PC-3 (cell line): ENCODE measurements at regions of chr12 and their contacts with region 1.

Region 1: GRCh38 chr12:51424662-51425438 is at the start of gene SLC4A8:
- DNase-seq: peak; percentile 84
- ATAC-seq: peak; percentile 94
- H3K4me3 ChIP-seq: peak within 1 kb of the TSS; percentile 75
- H3K27ac ChIP-seq: no peak within 1 kb of the TSS
- H3K4me1 ChIP-seq: peaks cover 13% of the 10 kb centered on the region
- H3K27me3 ChIP-seq: no peaks in the 10 kb centered on the region
- CTCF ChIP-seq: peak; percentile 84
- total RNA-seq, gene SLC4A8: 3.3 and 4.2 TPM in 2 replicates

Region 2: DNA sequence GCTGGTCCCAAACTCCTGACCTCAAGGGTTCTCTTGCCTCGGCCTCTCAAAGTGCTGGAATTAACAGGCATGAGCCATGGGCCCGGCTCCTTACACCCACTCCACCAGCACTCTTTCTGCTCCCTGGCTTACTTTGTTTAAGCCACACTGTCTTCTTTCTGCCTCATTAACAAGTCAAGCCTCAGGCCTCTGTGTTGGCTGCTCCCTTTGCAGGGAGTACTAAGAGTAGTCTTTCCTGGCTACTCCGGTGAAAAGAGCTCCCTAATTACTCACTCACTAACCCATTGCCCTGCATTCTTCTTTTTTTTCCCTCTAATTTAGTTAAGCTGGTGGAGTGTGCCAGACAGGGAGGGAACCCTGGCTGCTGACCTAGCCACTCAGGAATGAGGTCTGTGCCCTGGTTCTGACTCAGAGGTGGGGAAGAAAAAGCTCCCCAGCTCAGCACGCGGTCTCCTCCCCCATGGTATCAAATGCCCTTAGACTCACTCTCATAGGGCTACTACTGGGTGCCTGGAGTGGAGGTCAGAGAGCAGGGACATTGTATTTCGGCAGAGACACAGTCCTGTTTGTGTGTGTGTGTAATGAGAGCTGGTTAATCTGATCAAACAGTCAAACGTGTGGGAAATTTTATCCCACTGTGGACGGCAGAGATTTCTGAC is 53.4 kb before region 1 on chr12:
- CTCF ChIA-PET with region 1: interaction called, 7 read pairs
- POLR2A ChIA-PET with region 1: no interaction called
- intact Hi-C with region 1: loop called (anchors 5 kb)
- DNase-seq: peak; percentile 98
- ATAC-seq: peak; percentile 97
- H3K4me3 ChIP-seq: peak overlapping the region; percentile 42
- H3K27ac ChIP-seq: peak overlapping the region; percentile 95
- H3K4me1 ChIP-seq: peaks cover 42% of the 10 kb centered on the region
- H3K27me3 ChIP-seq: no peaks in the 10 kb centered on the region
- CTCF ChIP-seq: no peak

Region 3: DNA sequence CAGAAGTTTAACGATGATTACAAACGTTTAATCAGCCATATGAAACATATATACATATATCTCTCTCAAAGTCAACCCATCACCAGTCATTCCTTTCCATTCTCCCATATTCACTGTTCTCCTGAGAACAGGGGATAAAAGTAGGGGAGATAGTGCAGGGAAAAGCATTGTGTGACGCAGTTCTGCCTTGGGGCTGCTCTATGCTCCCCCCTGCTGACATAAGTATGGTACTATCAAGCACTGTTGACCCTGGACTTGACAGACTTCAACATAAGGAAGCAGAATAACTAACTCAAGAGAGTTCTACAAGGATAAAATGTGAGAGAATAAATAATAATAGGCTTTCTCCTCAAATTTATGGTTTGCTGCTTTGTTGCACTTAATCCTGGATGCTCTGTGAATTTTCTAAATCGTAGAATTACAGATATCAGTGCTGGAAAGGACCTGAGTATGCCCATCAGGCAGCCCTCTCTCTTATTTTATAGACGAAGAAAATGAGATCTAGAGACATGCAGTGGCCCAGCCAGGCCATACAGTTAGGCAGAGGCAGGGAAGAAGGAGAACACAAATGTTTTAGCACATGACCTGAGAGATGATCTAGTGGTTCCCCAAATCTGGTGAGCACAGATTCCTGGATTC is 253.4 kb after region 1 on chr12:
- CTCF ChIA-PET with region 1: no interaction called
- POLR2A ChIA-PET with region 1: no interaction called
- intact Hi-C with region 1: loop called (anchors 1 kb)
- DNase-seq: peak; percentile 69
- ATAC-seq: peak; percentile 97
- H3K4me3 ChIP-seq: no peak overlapping the region
- H3K27ac ChIP-seq: no peak overlapping the region
- H3K4me1 ChIP-seq: peaks cover 7% of the 10 kb centered on the region
- H3K27me3 ChIP-seq: no peaks in the 10 kb centered on the region
- CTCF ChIP-seq: peak; percentile 88

Region 4: GRCh38 chr12:51871126-51871525 is 446.3 kb after region 1 on chr12:
- CTCF ChIA-PET with region 1: no interaction called
- POLR2A ChIA-PET with region 1: no interaction called
- intact Hi-C with region 1: loop called (anchors 1 kb)
- DNase-seq: no peak
- ATAC-seq: no peak
- H3K4me3 ChIP-seq: no peak overlapping the region
- H3K27ac ChIP-seq: no peak overlapping the region
- H3K4me1 ChIP-seq: no peaks in the 10 kb centered on the region
- H3K27me3 ChIP-seq: no peaks in the 10 kb centered on the region
- CTCF ChIP-seq: no peak

Region 5: DNA sequence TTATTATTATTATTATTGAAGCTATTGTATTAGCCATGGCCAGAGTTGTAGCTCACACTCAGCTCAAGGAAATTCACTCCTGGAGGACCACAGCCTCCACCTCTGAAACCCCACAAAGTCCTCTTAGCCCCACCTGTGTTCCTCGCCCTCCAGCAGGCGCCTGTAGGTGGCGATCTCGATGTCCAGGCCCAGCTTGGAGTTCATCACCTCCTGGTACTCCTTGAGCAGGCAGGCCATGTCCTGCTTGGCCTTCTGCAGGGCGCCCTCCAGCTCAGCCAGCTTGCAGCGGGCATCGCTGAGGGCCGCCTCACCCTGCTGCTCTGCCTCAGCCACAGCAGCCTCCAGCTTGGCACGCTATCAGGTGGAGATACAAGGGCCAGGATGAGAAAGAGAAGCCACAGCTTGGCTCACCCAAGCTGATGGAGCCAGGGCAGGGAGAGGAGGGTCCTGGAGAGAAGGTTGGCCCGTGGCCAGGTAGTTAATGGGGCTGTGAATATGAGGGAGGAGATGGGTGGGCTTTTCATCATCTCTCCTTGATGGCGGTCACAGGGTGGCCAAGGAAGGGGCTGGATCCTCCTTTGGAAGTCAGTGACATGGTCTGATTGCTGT is 937.4 kb after region 1 on chr12:
- CTCF ChIA-PET with region 1: no interaction called
- POLR2A ChIA-PET with region 1: no interaction called
- intact Hi-C with region 1: no loop called
- DNase-seq: no peak
- ATAC-seq: no peak
- H3K4me3 ChIP-seq: no peak overlapping the region
- H3K27ac ChIP-seq: no peak overlapping the region
- H3K4me1 ChIP-seq: peaks cover 3% of the 10 kb centered on the region; the same call in 1 of the 2 replicates
- H3K27me3 ChIP-seq: no peaks in the 10 kb centered on the region
- CTCF ChIP-seq: peak; percentile 51; the same call in 1 of the 2 replicates